Activated B cell treated with CpG ODN at 0.5 μM for 24 hours (primary cell): ENCODE measurements at regions of chr1 and their contacts with region 1.

Region 1: DNA sequence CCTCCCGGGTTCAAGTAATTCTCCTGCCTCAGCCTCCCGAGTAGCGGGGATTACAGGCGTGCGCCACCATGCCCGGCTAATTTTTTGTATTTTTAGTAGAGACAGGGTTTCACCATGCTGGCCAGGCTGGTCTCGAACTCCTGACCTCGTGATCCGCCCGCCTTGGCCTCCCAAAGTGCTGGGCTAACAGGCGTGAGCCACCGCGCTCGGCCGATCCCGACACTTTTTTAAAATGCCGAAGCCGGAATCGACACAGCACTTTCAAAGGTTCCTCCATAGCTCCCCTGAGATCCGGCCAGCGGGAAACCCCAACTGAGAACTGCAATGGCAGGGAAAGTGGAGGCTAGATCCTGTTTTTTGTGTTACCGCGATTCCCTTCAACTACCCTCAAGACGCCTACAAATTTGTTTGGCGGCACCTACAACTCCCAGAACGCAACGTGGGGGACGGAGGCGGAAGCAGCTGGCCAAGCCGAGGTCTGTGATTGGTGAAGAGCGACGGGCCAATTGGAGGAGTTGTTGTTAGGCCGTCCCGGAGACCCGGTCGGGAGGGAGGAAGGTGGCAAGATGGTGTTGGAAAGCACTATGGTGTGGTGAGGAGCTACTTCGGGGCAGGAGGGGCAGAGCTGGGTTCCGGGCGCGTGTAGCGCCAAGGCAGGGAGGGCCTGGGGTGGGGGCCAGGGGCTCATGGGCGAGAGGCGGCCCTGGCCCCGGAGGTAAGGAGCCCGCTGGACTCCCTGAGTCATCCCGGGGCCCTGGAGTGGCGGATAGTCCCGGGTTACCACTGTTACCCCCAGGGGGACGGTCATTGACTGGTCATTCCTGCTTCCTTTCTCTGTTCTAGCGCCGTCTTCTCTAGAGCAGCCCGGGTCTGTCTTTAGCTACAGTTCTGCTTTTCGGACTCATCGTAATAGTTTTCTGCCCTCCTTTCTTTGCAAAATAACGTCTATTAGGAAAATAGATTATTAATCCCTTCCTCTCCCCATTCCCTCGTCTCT is at the start of gene PSMD4:
- DNase-seq: peak; percentile 77
- ATAC-seq: peak; percentile 87
- H3K4me3 Mint-ChIP-seq: peak within 1 kb of the TSS; percentile 97
- H3K27ac Mint-ChIP-seq: peak within 1 kb of the TSS; percentile 93
- H3K4me1 Mint-ChIP-seq: peaks cover 37% of the 10 kb centered on the region
- H3K27me3 Mint-ChIP-seq: no peaks in the 10 kb centered on the region
- CTCF ChIP-seq: no peak
- total RNA-seq, gene PSMD4: 189 and 201 TPM in 2 replicates

Region 2: GRCh38 chr1:150925816-150926741 is 328.4 kb before region 1 on chr1 and contains the start of gene SETDB1:
- CTCF ChIA-PET with region 1: no interaction called
- POLR2A ChIA-PET with region 1: interaction called, 12 read pairs
- intact Hi-C with region 1: no loop called
- DNase-seq: peak; percentile 79
- ATAC-seq: peak; percentile 90
- H3K4me3 Mint-ChIP-seq: peak within 1 kb of the TSS; percentile 98
- H3K27ac Mint-ChIP-seq: peak within 1 kb of the TSS; percentile 98
- H3K4me1 Mint-ChIP-seq: peaks cover 35% of the 10 kb centered on the region
- H3K27me3 Mint-ChIP-seq: no peaks in the 10 kb centered on the region
- CTCF ChIP-seq: no peak
- total RNA-seq, gene SETDB1: 101 and 105 TPM in 2 replicates

Region 3: GRCh38 chr1:151070474-151071276 is 183.8 kb before region 1 on chr1 and contains the start of gene GABPB2:
- CTCF ChIA-PET with region 1: no interaction called
- POLR2A ChIA-PET with region 1: interaction called, 5 read pairs
- intact Hi-C with region 1: loop called (anchors 1 kb)
- DNase-seq: peak; percentile 89
- ATAC-seq: peak; percentile 87
- H3K4me3 Mint-ChIP-seq: peak within 1 kb of the TSS; percentile 97
- H3K27ac Mint-ChIP-seq: peak within 1 kb of the TSS; percentile 100
- H3K4me1 Mint-ChIP-seq: peaks cover 16% of the 10 kb centered on the region
- H3K27me3 Mint-ChIP-seq: no peaks in the 10 kb centered on the region
- CTCF ChIP-seq: peak; percentile 25
- total RNA-seq, gene GABPB2: 13.8 and 17.4 TPM in 2 replicates

Region 4: DNA sequence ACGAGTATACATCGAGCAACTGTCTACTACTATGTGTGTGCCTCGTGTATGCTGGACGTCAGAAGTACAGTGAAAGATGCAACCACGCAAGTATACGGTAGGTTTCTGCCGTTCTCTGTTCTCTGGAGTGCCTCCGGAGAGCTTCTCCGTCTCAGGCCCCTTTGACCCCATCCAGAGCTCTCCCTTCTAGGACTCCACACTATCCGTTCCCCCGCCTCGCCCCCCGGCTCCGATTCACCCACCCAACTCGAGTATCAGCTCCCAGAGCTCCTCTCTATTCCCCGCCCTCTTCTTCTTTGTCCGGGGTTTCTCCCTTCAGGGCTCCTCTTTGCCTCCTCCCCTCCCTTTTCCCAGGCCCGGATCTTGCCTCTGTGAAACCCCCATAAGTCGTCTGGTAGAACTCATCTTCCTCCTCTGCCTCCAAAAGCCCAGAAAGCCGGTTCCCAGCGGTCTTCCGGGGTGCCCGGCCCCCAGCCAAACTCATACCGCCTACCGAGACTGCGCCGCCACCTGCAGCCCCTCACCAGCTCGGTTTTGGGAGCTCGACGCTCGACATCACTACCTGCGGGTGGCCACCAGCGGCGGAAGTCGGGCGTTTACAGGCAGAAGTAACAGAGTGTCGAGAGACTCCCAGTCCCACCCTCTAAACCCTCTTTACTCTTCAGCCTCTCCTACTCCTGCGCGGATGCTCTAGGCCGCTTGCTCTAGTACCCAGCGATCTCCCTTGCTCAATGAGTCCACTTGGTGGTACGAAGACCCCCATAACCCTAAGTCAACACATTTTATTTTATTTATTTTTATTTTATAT is 64.7 kb before region 1 on chr1 and contains the start of gene VPS72:
- CTCF ChIA-PET with region 1: interaction called, 4 read pairs
- POLR2A ChIA-PET with region 1: interaction called, 18 read pairs
- intact Hi-C with region 1: no loop called
- DNase-seq: peak; percentile 73
- ATAC-seq: peak; percentile 93
- H3K4me3 Mint-ChIP-seq: peak within 1 kb of the TSS; percentile 100
- H3K27ac Mint-ChIP-seq: peak within 1 kb of the TSS; percentile 99
- H3K4me1 Mint-ChIP-seq: peaks cover 34% of the 10 kb centered on the region
- H3K27me3 Mint-ChIP-seq: no peaks in the 10 kb centered on the region
- CTCF ChIP-seq: no peak
- total RNA-seq, gene VPS72: 58.8 and 72.1 TPM in 2 replicates

Region 5: DNA sequence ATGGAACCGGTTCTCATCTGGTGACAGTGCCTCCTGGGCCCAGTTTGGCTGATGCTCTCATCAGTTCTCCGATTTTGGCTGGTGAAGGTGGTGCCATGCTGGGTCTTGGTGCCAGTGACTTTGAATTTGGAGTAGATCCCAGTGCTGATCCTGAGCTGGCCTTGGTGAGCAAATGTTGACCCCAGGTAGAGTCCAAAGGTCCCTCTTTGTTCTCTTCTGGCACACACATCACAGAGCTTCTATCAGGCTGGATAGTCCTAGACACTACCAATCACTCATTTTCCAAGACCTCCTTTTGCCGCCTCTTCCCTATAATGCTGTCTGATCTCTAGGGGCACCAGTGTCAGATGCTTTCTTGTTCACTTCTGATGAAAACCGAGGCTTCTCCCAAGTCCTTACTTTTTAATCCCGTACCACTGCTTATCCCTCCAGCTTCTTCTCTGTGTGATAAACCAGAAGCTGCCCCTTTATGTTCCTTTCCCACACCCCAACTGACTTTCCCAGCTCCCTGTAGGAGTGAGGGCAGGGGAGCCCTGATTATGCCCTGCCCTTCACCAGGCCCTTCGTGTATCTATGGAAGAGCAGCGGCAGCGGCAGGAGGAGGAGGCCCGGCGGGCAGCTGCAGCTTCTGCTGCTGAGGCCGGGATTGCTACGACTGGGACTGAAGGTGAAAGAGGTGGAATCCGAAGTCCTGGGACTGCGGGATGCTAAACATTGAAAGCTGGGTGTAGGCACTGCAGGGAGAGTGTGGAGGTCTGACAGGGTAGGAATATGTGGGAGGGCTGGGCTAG is 11.1 kb after region 1 on chr1:
- CTCF ChIA-PET with region 1: interaction called, 7 read pairs
- POLR2A ChIA-PET with region 1: interaction called, 14 read pairs
- intact Hi-C with region 1: no loop called
- DNase-seq: no peak
- ATAC-seq: no peak
- H3K4me3 Mint-ChIP-seq: no peak overlapping the region
- H3K27ac Mint-ChIP-seq: peak overlapping the region; percentile 50
- H3K4me1 Mint-ChIP-seq: peaks cover 18% of the 10 kb centered on the region
- H3K27me3 Mint-ChIP-seq: no peaks in the 10 kb centered on the region
- CTCF ChIP-seq: no peak

Region 6: GRCh38 chr1:151340870-151341754 is 86.6 kb after region 1 on chr1:
- CTCF ChIA-PET with region 1: interaction called, 10 read pairs
- POLR2A ChIA-PET with region 1: no interaction called
- intact Hi-C with region 1: loop called (anchors 10 kb)
- DNase-seq: no peak
- ATAC-seq: peak; percentile 86
- H3K4me3 Mint-ChIP-seq: no peak overlapping the region
- H3K27ac Mint-ChIP-seq: peak overlapping the region; percentile 100
- H3K4me1 Mint-ChIP-seq: peaks cover 47% of the 10 kb centered on the region
- H3K27me3 Mint-ChIP-seq: no peaks in the 10 kb centered on the region
- CTCF ChIP-seq: no peak